ENCODE measurements at regions of chr11 and their contacts with region 1.

Region 1: GRCh38 chr11:18012863-18013781 is at the start of gene SERGEF:
- DNase-seq: peak; percentile 96 to 97
- H3K4me3 ChIP-seq: peak within 1 kb of the TSS; percentile 65 to 79 (median 70)
- H3K27ac ChIP-seq: peak within 1 kb of the TSS; percentile 82 to 91 (median 89)
- H3K4me1 ChIP-seq: peaks cover 0 to 18% (median 17%) of the 10 kb centered on the region in 4 donors
- H3K27me3 ChIP-seq: no peaks in the 10 kb centered on the region
- CTCF ChIP-seq: peak in 4 of 7 experiments; percentile 1 to 65 (median 25)
- EP300 ChIP-seq: no peak
- POLR2A ChIP-seq: peak in 1 of 4 donors; percentile 51
- total RNA-seq, gene SERGEF: 9.3 to 158 (median 20.5) TPM in 4 of 5 donors, not detected in the other

Region 2: DNA sequence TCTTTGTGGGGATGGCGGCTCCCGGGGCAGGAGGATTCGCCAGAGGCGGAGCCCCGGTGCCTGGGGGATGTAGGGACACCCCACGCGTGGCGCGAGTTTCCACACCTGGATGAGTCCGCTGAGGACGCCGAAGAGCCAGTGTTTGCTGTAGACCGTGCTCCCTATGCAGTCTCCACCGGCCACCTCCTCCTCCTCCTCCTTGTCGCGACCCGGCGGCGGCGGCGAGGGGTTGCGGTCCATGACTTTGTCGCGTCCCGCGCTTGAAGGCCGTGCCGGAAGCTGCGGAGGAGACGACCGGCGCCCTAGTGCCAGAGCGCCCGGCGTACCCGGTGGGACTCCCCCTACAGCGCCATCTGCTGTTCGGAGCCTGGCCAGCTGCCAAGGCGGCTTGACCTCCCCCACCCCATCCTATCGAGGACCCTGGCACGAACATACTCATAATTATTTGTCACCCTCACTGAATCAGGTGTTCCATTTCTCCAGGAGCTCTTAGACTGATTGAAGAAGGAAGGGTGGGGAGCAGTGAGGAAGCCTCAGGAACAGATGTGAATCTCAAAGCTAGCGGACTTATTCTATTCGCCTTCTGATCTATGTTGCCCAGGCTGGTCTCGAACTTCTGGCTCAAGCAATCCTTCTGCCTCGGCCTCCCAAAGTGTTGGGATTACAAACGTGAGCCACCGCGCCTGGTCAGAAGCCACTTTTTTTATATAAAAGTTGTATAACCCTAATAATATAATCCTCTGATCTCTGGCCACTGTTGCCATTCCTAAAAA is 92.9 kb after region 1 on chr11 and contains the start of gene SAAL1:
- intact Hi-C with region 1: loop called (anchors 10 kb)
- DNase-seq: peak; percentile 88 to 95
- H3K4me3 ChIP-seq: peak within 1 kb of the TSS; percentile 88 to 96 (median 91)
- H3K27ac ChIP-seq: peak within 1 kb of the TSS; percentile 44 to 83 (median 71)
- H3K4me1 ChIP-seq: peaks cover 9 to 24% (median 15%) of the 10 kb centered on the region in 4 donors
- H3K27me3 ChIP-seq: peaks cover 0 to 10% (median 0%) of the 10 kb centered on the region in 3 donors
- CTCF ChIP-seq: peak in 5 of 7 experiments; percentile 32 to 74 (median 56)
- EP300 ChIP-seq: no peak
- POLR2A ChIP-seq: no peak
- total RNA-seq, gene SAAL1: 2.0 to 20.2 (median 5.8) TPM

Measured in stomach (tissue), 19 donors.